HepG2 (cell line): ENCODE measurements at regions of chr1 and their contacts with region 1.

Region 1: DNA sequence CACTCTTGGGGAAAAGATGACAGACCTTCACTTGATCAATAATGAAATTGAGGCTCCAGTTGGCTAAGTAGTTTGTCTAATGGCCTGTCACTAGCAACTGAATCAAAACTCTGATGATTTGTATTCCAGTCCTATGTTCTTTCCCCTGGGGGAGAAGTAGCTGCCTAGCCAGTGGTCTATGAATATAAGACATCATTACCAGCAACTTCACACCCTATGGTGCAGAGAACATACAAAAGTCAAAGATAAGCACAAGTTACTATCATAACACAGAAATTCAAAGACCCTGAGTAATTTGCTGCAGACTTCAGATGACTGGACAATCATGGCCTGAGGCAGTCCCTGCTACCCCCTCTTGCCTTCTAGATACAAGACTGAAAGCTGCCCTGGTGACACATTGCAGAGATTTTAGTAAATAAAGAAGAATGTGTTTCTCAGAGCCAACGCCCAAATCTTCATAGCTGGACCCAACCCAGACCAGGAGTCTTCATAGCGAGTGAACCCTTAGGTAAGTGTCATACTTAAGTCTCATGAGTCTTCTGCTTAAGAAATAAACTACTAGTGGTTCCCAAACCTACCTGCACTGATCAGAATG is 985 bp downstream of the PDZK1 start:
- DNase-seq: no peak
- ATAC-seq: no peak
- H3K4me3 ChIP-seq: peak overlapping the region; percentile 62 to 72 (median 69); a peak in 5 of 6 replicates
- H3K27ac ChIP-seq: peak overlapping the region; percentile 90
- H3K4me1 ChIP-seq: peaks cover 98% of the 10 kb centered on the region
- H3K27me3 ChIP-seq: no peaks in the 10 kb centered on the region
- CTCF ChIP-seq: no peak
- EP300 ChIP-seq: no peak
- POLR2A ChIP-seq: no peak
- RAD21 ChIP-seq: no peak

Region 2: DNA sequence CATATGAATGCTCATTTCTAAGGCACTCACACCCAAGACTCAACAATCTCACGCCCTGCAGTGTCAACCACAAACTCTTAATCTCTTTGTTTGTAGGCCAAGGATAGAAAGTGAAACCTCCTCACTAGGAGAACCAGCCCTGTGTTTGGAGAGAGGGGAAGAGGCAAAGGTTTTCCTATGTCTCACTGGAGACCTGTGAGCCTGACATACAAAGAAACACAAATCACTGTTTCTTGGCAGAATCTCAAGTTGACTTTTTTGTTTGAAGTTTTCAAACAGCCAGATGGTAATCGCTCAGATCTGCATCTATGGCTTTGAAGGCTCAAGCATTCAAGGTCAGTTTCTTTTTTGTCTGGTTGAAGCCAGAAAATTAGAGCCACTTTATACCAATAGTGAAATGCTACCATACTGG is 15.6 kb before region 1 on chr1:
- CTCF ChIA-PET with region 1: no interaction called
- POLR2A ChIA-PET with region 1: interaction called, 45 read pairs
- in situ Hi-C with region 1: no loop called
- intact Hi-C with region 1: no loop called
- DNase-seq: peak; percentile 54
- ATAC-seq: peak; percentile 45
- H3K4me3 ChIP-seq: no peak overlapping the region; a peak in 1 of 6 replicates
- H3K27ac ChIP-seq: peak overlapping the region; percentile 51
- H3K4me1 ChIP-seq: peaks cover 33% of the 10 kb centered on the region
- H3K27me3 ChIP-seq: no peaks in the 10 kb centered on the region
- CTCF ChIP-seq: no peak
- EP300 ChIP-seq: 0 out of 4 replicates have a peak, but pooled peaks of 1 of the 2 experiments have one; percentile 31
- POLR2A ChIP-seq: no peak
- RAD21 ChIP-seq: no peak

Region 3: DNA sequence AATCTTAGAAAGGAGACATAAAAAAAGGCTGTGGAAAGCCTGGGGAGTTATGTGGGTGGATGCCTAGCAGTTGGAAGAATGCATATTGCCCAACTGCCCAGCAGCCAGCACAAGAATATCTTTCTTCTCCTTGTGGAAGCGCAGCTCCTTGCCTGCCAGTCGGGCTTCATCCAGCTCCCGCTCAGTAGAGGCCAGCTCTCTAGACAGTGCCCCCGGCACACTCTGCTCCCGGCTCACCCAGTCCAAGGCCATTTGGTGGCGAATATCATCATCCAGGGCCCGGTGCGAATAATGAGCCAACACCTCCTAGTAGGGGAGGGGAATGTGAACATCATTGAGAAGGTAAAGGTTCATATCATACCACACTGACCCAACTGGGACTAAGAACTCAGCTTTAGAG is 230.1 kb after region 1 on chr1:
- CTCF ChIA-PET with region 1: no interaction called
- POLR2A ChIA-PET with region 1: no interaction called
- in situ Hi-C with region 1: no loop called
- intact Hi-C with region 1: no loop called
- DNase-seq: no peak
- ATAC-seq: no peak
- H3K4me3 ChIP-seq: no peak overlapping the region
- H3K27ac ChIP-seq: no peak overlapping the region
- H3K4me1 ChIP-seq: no peaks in the 10 kb centered on the region; the same call in 1 of the 2 replicates
- H3K27me3 ChIP-seq: no peaks in the 10 kb centered on the region; a peak in 1 of 5 replicates
- CTCF ChIP-seq: no peak
- EP300 ChIP-seq: no peak
- POLR2A ChIP-seq: no peak
- RAD21 ChIP-seq: no peak

Region 4: DNA sequence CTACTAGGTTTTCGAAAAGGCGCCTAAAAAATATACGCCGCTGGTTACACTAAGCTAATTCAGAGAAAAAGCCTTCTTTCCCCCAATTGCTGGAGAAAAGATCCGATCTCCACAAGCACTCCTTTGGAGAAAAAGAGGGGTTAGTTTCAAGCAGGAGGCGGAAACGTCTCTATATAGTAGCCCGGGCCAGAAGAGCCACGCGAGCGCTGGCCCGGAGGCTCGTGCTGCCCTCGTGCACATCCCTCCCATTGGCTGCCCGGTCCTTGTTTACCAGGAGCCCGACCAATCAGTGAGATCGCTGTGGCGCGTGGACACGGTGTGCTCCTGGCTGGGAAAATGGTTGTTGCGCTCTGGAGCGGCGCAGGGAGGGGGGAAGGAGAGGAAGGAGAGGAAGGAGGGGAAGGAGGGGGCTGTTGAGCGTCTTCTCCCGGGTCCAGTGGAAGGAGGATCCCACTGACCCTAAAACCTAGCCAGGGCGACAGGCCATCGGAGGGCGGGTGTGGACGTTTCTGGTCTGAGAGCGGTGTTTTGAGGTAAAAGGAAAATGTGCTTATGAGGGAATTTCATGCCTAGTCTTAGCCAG is 290.3 kb after region 1 on chr1 and contains the start of gene TXNIP:
- CTCF ChIA-PET with region 1: no interaction called
- POLR2A ChIA-PET with region 1: no interaction called
- in situ Hi-C with region 1: no loop called
- intact Hi-C with region 1: no loop called
- DNase-seq: peak; percentile 94
- ATAC-seq: peak; percentile 99
- H3K4me3 ChIP-seq: peak within 1 kb of the TSS; percentile 68 to 98 (median 91)
- H3K27ac ChIP-seq: peak within 1 kb of the TSS; percentile 94
- H3K4me1 ChIP-seq: peaks cover 67% of the 10 kb centered on the region
- H3K27me3 ChIP-seq: no peaks in the 10 kb centered on the region; a peak in 1 of 5 replicates
- CTCF ChIP-seq: peak; percentile 14; the same call in 1 of the 2 replicates
- EP300 ChIP-seq: peak in 1 of 2 experiments; percentile 97; a peak in 3 of 4 replicates
- POLR2A ChIP-seq: peak; percentile 94 to 99
- RAD21 ChIP-seq: 0 out of 2 replicates have a peak, but pooled peaks have one; percentile 14
- total RNA-seq, gene TXNIP: 24.4 and 25.4 TPM in 2 replicates